CD8-positive, alpha-beta T cell (primary cell): ENCODE measurements at regions of chr9 and their contacts with region 1.

Region 1: GRCh38 chr9:136631038-136632000 is 31.4 kb upstream of the EGFL7 start:
- DNase-seq: peak; percentile 63 to 89 (median 83)
- ATAC-seq: peak; percentile 89
- H3K4me3 ChIP-seq: no peak overlapping the region
- H3K4me3 Mint-ChIP-seq: no peak overlapping the region
- H3K27ac ChIP-seq: peak overlapping the region in 1 of 2 experiments; percentile 40
- H3K27ac Mint-ChIP-seq: no peak overlapping the region
- H3K4me1 ChIP-seq: peaks cover 12% of the 10 kb centered on the region
- H3K4me1 Mint-ChIP-seq: no peaks in the 10 kb centered on the region
- H3K27me3 ChIP-seq: peaks cover 0 to 2% of the 10 kb centered on the region in 2 experiments
- H3K27me3 Mint-ChIP-seq: peaks cover 3% of the 10 kb centered on the region
- CTCF ChIP-seq: peak; percentile 81

Region 2: DNA sequence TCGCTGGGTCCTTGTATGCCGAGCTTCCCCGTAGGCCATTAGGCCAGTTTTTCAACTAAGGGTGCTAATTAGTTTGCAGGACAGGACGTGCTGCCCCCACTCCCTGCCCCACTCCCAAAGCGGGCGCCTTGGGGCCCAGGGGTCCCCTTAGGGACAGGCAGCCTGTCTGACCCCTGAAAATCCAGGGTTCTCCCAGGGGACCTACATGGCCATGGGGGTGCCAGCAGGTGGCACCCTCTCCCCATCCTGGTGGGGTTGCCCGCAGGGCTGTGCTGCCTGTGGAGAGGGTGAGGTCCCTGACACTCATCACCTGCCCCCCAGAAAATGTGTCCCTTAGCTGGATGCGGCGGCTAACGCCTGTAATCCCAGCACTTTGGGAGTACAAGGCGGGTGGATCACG is 318.9 kb before region 1 on chr9:
- CTCF ChIA-PET with region 1: no interaction called
- POLR2A ChIA-PET with region 1: no interaction called
- intact Hi-C with region 1: loop called in 1 of 2 experiments (anchors 2 kb)
- DNase-seq: peak in 8 of 9 experiments; percentile 7 to 65 (median 40)
- ATAC-seq: peak; percentile 50
- H3K4me3 ChIP-seq: no peak overlapping the region
- H3K4me3 Mint-ChIP-seq: no peak overlapping the region
- H3K27ac ChIP-seq: no peak overlapping the region
- H3K27ac Mint-ChIP-seq: no peak overlapping the region
- H3K4me1 ChIP-seq: no peaks in the 10 kb centered on the region
- H3K4me1 Mint-ChIP-seq: peaks cover 4% of the 10 kb centered on the region
- H3K27me3 ChIP-seq: peaks cover 7 to 31% of the 10 kb centered on the region in 2 experiments
- H3K27me3 Mint-ChIP-seq: no peaks in the 10 kb centered on the region
- CTCF ChIP-seq: peak; percentile 40

Region 3: DNA sequence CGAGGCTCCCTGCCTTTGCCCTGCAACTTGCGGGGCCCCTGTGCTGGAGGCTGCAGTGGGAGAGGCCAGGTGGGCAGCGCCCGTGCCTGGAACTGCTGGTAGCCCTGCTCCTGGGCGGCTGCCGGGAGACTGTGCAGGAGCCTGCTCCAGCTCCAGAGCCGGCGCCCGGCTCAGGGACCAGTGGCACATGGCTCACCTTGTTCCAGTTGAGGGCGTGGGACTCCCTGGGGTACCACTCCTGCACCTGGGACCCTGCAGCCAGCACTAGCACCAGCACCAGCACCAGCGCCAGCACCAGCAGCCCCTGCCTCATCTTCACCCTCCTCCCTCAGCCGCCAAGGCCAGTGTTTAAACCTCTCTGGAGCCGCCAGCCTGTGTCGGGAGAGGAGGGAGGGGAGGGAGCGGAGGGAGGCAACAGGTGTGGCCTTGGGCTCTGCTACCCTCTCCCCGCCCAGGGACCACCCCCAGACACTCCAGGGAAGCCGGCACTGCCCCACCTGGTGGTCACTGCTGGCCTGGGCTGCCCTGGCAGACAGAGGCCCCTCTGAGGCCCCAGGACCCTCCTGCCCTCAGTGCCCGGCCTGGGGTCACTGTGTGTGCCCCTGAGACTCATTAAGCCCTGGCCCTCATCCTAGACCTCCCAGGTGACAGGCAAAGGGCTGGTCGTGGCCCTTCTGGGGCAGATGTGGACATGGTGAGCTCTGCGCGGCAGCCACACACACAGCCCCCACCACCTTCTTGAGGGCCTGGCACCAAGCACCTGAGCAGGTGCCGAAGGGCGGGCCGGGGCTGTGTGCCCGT is 111.5 kb after region 1 on chr9 and contains the start of gene LCN10:
- CTCF ChIA-PET with region 1: no interaction called
- POLR2A ChIA-PET with region 1: no interaction called
- intact Hi-C with region 1: no loop called
- DNase-seq: no peak
- ATAC-seq: no peak
- H3K4me3 ChIP-seq: peak within 1 kb of the TSS; percentile 42 to 71
- H3K4me3 Mint-ChIP-seq: peak within 1 kb of the TSS; percentile 80
- H3K27ac ChIP-seq: no peak within 1 kb of the TSS
- H3K27ac Mint-ChIP-seq: no peak within 1 kb of the TSS
- H3K4me1 ChIP-seq: peaks cover 20% of the 10 kb centered on the region
- H3K4me1 Mint-ChIP-seq: peaks cover 5% of the 10 kb centered on the region
- H3K27me3 ChIP-seq: peaks cover 0 to 9% of the 10 kb centered on the region in 2 experiments
- H3K27me3 Mint-ChIP-seq: no peaks in the 10 kb centered on the region
- CTCF ChIP-seq: no peak
- total RNA-seq, gene LCN10: 0.14 to 0.38 TPM

Region 4: DNA sequence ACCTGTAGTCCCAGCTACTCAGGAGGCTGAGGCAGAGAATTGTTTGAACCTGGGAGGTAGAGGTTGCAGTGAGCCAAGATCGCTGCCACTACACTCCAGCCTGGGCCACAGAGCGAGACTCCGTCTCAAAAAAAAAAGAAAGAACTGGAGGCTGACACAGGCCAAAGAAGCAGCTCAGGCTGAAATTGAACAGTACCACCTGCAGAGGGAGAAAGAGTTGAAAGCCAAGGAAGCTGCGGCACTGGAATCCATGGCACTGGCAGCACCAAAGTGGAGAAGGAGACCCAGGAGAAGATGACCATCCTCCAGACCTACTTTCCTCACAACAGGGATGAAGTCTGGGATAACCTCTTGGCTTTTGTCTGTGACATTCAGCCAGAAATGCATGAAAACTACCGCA is 148.5 kb after region 1 on chr9:
- CTCF ChIA-PET with region 1: no interaction called
- POLR2A ChIA-PET with region 1: no interaction called
- intact Hi-C with region 1: no loop called
- DNase-seq: no peak
- ATAC-seq: no peak
- H3K4me3 ChIP-seq: no peak overlapping the region
- H3K4me3 Mint-ChIP-seq: no peak overlapping the region
- H3K27ac ChIP-seq: no peak overlapping the region
- H3K27ac Mint-ChIP-seq: no peak overlapping the region
- H3K4me1 ChIP-seq: no peaks in the 10 kb centered on the region
- H3K4me1 Mint-ChIP-seq: no peaks in the 10 kb centered on the region
- H3K27me3 ChIP-seq: no peaks in the 10 kb centered on the region
- H3K27me3 Mint-ChIP-seq: peaks cover 13% of the 10 kb centered on the region
- CTCF ChIP-seq: no peak